ENCODE measurements at regions of chr3 and their contacts with region 1.

Region 1: DNA sequence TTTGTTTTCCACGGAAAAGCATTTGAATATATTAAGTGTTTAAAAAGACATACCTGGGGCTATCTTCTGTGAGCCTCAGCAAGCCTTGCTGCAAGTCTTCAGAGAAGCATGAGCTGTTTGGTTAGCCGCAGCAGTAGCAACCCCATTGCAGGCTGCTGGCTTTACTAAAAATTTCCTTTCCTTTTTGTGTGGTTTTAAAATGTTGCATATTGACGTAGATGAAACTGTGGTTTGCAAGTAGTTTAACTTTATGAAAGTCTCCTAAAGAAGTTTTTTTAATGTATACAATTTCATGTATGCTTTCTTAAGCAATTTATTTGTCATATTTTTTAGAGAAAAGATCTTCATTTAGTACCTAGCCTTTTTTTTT is at the start of gene GPR171:
- DNase-seq: peak; percentile 83
- H3K4me3 Mint-ChIP-seq: peak within 1 kb of the TSS; percentile 88
- H3K27ac Mint-ChIP-seq: peak within 1 kb of the TSS; percentile 94
- H3K4me1 Mint-ChIP-seq: peaks cover 69% of the 10 kb centered on the region
- H3K27me3 Mint-ChIP-seq: no peaks in the 10 kb centered on the region
- total RNA-seq, gene GPR171: 144 to 181 TPM

Region 2: GRCh38 chr3:151168269-151169094 is 34.6 kb before region 1 on chr3:
- CTCF ChIA-PET with region 1: interaction called, 12 read pairs
- POLR2A ChIA-PET with region 1: interaction called, 4 read pairs
- DNase-seq: peak; percentile 85
- H3K4me3 Mint-ChIP-seq: no peak overlapping the region
- H3K27ac Mint-ChIP-seq: no peak overlapping the region
- H3K4me1 Mint-ChIP-seq: peaks cover 47% of the 10 kb centered on the region
- H3K27me3 Mint-ChIP-seq: no peaks in the 10 kb centered on the region

Region 3: DNA sequence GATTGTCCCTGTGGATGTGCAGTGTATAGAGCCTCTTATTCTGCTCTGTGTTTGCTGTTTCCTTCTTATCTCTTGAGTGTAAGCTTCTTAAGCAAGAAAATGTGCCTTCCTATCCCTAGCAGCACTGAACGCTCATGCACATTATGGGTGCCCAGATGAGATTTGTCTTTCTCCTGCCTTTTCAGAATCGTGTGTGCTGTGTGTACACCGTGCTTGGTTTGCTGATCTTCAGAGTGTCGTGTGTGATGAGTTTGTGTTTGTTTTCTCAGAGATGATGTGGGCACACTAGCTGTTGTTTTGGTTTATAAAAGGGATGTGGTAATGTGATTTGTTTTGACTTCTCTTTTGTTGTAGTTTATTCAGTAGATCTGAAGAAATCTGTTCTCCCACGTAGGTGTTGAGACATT is 19.8 kb before region 1 on chr3:
- CTCF ChIA-PET with region 1: interaction called, 13 read pairs
- POLR2A ChIA-PET with region 1: interaction called, 6 read pairs
- DNase-seq: peak; percentile 52
- H3K4me3 Mint-ChIP-seq: peak overlapping the region; percentile 48
- H3K27ac Mint-ChIP-seq: peak overlapping the region; percentile 87
- H3K4me1 Mint-ChIP-seq: peaks cover 61% of the 10 kb centered on the region
- H3K27me3 Mint-ChIP-seq: no peaks in the 10 kb centered on the region

Region 4: GRCh38 chr3:151192545-151192944 is 10.5 kb before region 1 on chr3:
- CTCF ChIA-PET with region 1: interaction called, 11 read pairs
- POLR2A ChIA-PET with region 1: no interaction called
- DNase-seq: no peak
- H3K4me3 Mint-ChIP-seq: no peak overlapping the region
- H3K27ac Mint-ChIP-seq: no peak overlapping the region
- H3K4me1 Mint-ChIP-seq: peaks cover 45% of the 10 kb centered on the region
- H3K27me3 Mint-ChIP-seq: no peaks in the 10 kb centered on the region

Region 5: DNA sequence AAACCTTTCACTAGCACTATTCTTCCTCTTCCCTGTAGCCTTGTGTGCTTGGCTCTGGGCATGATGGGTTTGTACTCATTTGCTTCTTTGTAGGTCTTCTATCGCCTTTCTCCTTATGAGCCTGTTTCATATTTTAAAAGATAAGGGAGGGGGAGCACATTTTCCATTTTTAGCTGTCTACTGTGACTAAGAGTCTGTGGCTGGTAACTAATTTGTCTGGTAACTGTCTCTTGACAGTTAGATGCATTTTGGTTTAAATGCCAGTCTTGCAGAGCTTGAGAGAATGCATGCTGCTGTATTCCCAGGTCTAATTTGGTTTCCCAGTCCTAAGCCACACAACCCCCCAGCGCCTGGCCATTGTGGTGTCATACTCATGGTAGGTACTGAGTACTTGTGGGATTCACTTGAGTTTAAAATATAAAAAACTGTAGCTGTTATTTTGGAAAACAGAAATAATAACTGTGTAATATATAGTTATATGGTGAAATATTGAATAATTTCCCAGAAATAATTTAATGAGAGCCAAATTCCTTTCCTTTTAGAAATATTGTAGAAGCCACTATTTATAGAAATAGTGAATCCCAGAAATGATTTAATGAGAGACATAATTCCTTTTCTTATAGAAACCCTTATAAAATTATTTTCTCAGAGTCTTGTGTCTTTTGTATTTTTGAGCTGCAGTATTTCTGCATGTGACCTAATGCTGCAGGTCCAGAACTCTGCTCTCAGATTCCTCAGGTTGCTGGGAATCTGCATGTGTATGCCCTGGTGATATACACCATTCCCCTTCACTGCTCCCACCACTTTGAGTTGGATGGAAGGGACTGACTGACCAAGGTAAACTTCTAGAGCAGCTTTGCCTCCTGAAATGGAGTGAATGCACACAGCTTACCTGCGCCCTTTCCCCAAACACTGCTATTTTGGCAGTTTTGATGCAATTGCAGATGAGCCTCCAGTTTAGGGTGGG is 13.9 kb after region 1 on chr3:
- CTCF ChIA-PET with region 1: interaction called, 10 read pairs
- POLR2A ChIA-PET with region 1: no interaction called
- DNase-seq: no peak
- H3K4me3 Mint-ChIP-seq: no peak overlapping the region
- H3K27ac Mint-ChIP-seq: no peak overlapping the region
- H3K4me1 Mint-ChIP-seq: no peaks in the 10 kb centered on the region
- H3K27me3 Mint-ChIP-seq: no peaks in the 10 kb centered on the region

Region 6: GRCh38 chr3:151227807-151228665 is 25.0 kb after region 1 on chr3:
- CTCF ChIA-PET with region 1: interaction called, 24 read pairs
- POLR2A ChIA-PET with region 1: no interaction called
- DNase-seq: peak; percentile 88
- H3K4me3 Mint-ChIP-seq: peak overlapping the region; percentile 2
- H3K27ac Mint-ChIP-seq: peak overlapping the region; percentile 79
- H3K4me1 Mint-ChIP-seq: peaks cover 59% of the 10 kb centered on the region
- H3K27me3 Mint-ChIP-seq: no peaks in the 10 kb centered on the region

Region 7: DNA sequence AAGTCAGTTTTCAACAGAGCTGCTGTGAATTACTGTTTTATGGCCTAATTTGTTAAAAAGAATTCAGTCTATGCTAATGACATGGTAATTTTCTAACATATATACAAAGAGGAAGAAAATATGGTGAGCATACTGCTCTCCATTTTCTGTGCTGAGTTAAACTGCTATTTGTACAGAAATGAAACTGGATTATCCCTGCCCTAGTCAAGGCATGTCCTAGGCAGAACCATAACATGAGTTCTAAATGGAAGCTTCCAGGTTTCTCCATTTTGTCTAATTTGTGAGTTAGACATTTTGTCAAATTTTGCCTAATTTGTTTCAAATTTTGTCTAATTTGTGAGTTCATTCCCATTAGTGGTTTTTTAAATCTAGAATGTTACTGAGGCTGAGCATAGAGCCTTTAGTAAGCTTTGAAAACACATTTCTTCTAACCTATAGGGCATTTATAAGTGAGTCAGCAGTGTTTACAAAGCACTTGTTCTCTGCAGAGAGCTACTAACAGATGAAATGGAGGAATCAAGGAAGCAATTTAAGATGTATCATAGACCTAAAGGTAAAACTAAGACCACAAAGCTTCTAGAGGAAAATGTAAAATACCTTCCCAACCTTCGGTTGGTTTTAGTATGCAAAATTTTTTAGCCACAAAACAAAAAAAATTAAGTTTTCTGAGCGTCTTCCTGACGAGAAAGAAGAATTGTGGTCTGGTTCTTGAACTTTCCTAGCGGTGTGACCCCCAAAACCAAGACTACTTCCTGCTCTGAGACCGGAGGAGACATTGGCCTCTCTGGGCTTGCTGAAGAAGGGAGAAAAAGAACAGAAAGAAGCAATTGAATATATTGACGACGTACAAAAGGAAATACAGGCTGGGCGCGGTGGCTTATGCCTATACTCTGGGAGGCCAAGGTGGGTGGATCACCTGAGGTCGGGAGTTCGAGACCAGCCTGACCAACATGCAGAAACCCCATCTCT is 65.5 kb after region 1 on chr3:
- CTCF ChIA-PET with region 1: no interaction called
- POLR2A ChIA-PET with region 1: no interaction called
- DNase-seq: peak; percentile 66
- H3K4me3 Mint-ChIP-seq: peak overlapping the region; percentile 49
- H3K27ac Mint-ChIP-seq: peak overlapping the region; percentile 90
- H3K4me1 Mint-ChIP-seq: peaks cover 29% of the 10 kb centered on the region
- H3K27me3 Mint-ChIP-seq: peaks cover 5% of the 10 kb centered on the region

Measured in activated CD4-positive, alpha-beta T cell treated with anti-CD3 and anti-CD28 coated beads, Interleukin-2, amount 10 ng/mL, durations not matched to agents 7 days and 5 days (primary cell).